AG04450 (cell line): ENCODE measurements at regions of chr14 and their contacts with region 1.

Region 1: GRCh38 chr14:50954811-50955372 is 10.6 kb upstream of the PYGL start:
- DNase-seq: no peak
- H3K4me3 ChIP-seq: no peak overlapping the region
- H3K27ac ChIP-seq: peak overlapping the region; percentile 98
- H3K27me3 ChIP-seq: no peaks in the 10 kb centered on the region
- CTCF ChIP-seq: peak; percentile 76

Region 2: DNA sequence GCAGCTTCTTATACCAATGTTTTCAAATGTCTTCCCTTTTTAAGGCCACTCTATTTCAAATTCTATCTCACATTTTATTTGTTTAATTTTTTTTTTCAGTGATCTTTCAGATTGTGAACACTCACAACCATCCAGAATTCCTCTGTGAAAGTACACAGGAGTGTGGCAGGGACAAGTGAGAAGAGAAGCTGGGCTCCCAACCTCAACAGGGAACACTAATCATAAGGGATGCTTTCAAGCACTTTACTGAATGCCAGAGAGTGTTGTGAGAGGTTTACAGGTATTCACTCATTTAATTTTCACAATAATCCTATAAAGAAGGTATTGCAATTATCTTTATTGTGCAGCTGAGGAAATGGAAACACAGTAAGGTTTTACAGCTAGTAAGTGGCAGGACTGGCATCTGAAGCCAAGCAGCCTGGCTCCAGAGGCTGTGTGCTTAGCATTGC is 49.5 kb after region 1 on chr14:
- CTCF ChIA-PET with region 1: no interaction called
- POLR2A ChIA-PET with region 1: no interaction called
- DNase-seq: no peak
- H3K4me3 ChIP-seq: no peak overlapping the region
- H3K27ac ChIP-seq: no peak overlapping the region
- H3K27me3 ChIP-seq: no peaks in the 10 kb centered on the region
- CTCF ChIP-seq: no peak

Region 3: GRCh38 chr14:51014625-51015024 is 59.7 kb after region 1 on chr14:
- CTCF ChIA-PET with region 1: interaction called, 13 read pairs
- POLR2A ChIA-PET with region 1: no interaction called
- DNase-seq: no peak
- H3K4me3 ChIP-seq: no peak overlapping the region
- H3K27ac ChIP-seq: no peak overlapping the region
- H3K27me3 ChIP-seq: no peaks in the 10 kb centered on the region
- CTCF ChIP-seq: no peak

Region 4: GRCh38 chr14:51053157-51053556 is 98.3 kb after region 1 on chr14:
- CTCF ChIA-PET with region 1: no interaction called
- POLR2A ChIA-PET with region 1: no interaction called
- DNase-seq: no peak
- H3K4me3 ChIP-seq: no peak overlapping the region
- H3K27ac ChIP-seq: no peak overlapping the region
- H3K27me3 ChIP-seq: peaks cover 5% of the 10 kb centered on the region
- CTCF ChIP-seq: no peak

Region 5: DNA sequence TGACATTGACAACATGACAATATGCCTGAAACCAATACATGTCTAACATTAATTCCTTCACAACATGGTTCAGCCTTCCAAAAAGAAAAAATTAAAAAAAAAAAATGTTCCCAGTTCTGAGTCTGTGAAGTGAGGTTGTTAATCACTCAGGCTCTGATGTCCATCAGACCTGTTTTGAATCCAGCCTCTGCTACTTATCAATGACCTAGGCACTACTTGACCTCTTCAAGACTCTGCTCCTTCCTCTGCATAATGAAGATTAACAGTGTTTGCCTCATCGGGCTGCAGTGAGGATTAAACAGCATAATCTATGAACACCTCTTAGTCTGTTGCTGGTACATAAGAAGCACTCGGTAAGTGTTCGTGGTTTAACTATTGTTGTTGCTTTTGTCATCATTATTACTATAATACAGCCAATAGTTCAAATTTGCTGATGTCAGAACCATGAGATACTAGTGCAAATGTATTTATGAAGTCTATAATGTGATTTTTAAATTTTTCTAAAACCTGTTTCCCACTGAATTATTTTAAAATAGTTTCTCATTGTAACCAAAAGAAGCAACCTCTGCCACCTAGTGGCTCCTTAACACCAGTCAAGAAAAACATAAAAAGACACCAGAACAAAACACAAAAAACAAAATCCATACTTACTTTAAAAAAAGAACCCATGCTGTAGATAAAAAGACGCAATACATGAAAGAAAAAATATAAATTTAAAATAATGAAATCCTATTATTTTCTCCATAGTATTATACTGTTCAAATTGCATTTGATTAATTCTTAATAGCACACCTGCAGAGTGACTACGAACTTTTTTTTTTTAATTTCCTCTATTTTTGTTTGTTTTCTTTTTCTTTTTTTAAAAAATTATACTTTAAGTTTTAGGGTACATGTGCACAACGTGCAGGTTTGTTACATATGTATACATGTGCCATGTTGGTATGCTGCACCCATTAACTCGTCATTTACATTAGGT is 264.9 kb after region 1 on chr14:
- CTCF ChIA-PET with region 1: interaction called, 36 read pairs
- POLR2A ChIA-PET with region 1: no interaction called
- DNase-seq: no peak
- H3K4me3 ChIP-seq: no peak overlapping the region
- H3K27ac ChIP-seq: no peak overlapping the region
- H3K27me3 ChIP-seq: no peaks in the 10 kb centered on the region
- CTCF ChIP-seq: peak; percentile 75